Activated CD8-positive, alpha-beta T cell treated with anti-CD3 and anti-CD28 coated beads, Interleukin-2, amount 10 ng/mL, durations not matched to agents 7 days and 5 days (primary cell): ENCODE measurements at regions of chr6 and their contacts with region 1.

Region 1: DNA sequence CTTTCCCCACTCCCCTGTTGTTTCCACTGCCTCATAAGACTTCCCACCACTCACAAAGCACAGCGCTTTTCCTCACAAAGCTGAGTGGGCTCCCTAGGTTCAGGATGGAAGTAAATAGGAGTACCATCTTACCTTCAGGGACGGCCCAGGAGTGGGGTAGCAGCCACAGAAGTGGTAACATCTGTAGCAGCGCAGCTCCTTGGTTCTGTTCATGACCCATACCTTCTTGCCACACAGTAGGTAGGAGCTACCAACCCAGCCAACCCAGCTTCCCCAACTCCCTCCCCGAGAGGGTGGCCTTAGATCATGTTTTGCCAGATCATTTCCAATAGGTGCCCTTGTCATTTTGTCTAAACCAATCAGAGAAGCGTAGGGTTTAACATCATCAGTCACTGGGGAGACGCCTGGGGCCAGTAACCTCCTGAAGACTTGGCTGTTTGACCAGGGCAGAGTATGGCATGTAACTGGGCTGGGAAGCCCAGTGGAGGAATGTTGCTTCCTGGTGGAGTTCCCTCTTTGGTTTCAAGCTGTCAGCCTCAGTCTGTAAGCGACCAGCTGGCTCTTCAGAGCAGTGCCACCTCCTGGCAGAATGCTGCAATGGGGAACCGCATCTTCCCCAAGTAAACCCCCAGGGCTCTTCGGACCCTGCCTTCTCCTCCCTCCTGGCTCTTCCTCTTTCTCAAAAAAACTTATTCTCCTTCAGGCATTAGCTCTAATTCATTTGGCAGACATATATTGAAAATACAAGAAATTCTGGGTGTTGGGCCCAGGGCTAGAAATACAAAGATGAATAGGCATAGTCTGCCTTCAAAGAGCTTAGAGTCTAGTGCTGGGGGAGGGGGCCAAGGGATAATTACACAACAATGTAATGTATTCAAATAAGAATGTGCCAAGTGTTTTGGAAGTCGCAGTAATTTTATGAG is at the start of gene HLA-DMA:
- DNase-seq: peak; percentile 85
- ATAC-seq: peak; percentile 98
- H3K4me3 Mint-ChIP-seq: peak within 1 kb of the TSS; percentile 77
- H3K27ac Mint-ChIP-seq: peak within 1 kb of the TSS; percentile 83
- H3K4me1 Mint-ChIP-seq: peaks cover 62% of the 10 kb centered on the region
- H3K27me3 Mint-ChIP-seq: no peaks in the 10 kb centered on the region
- total RNA-seq, gene HLA-DMA: 28.6 to 30.5 TPM

Region 2: GRCh38 chr6:32853541-32854375 is 99.3 kb before region 1 on chr6 and contains the starts of genes PSMB9 and TAP1:
- CTCF ChIA-PET with region 1: interaction called, 23 read pairs
- POLR2A ChIA-PET with region 1: interaction called, 4 read pairs
- DNase-seq: peak; percentile 97
- ATAC-seq: peak; percentile 85
- H3K4me3 Mint-ChIP-seq: peak within 1 kb of the TSS; percentile 97
- H3K27ac Mint-ChIP-seq: peak within 1 kb of the TSS; percentile 100
- H3K4me1 Mint-ChIP-seq: peaks cover 58% of the 10 kb centered on the region
- H3K27me3 Mint-ChIP-seq: no peaks in the 10 kb centered on the region
- total RNA-seq, gene PSMB9: 319 to 325 TPM
- total RNA-seq, gene TAP1: 319 to 328 TPM

Region 3: DNA sequence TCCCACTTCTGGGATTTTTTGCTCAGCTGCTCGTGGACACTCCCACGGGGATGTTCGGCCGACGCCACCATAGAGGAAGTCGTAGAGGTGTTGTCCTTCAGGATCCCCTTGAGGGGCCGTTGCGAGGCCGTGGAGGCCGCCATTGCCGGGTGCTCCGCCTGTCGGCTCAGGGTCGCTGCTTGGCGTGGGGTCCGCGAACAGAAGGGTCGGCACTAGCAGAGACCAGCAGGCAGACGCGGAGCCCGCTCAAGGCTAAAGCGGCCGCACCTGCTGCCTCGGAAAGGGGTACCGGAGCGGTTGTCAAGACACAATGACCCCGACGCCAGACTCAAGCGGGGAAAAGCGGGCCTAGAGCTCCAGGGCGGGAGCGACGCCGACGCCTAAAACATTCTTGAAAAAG is 73.4 kb before region 1 on chr6:
- CTCF ChIA-PET with region 1: interaction called, 57 read pairs
- POLR2A ChIA-PET with region 1: no interaction called
- DNase-seq: no peak
- ATAC-seq: no peak
- H3K4me3 Mint-ChIP-seq: no peak overlapping the region
- H3K27ac Mint-ChIP-seq: no peak overlapping the region
- H3K4me1 Mint-ChIP-seq: no peaks in the 10 kb centered on the region
- H3K27me3 Mint-ChIP-seq: no peaks in the 10 kb centered on the region

Region 4: GRCh38 chr6:32885698-32886286 is 67.3 kb before region 1 on chr6:
- CTCF ChIA-PET with region 1: interaction called, 57 read pairs
- POLR2A ChIA-PET with region 1: no interaction called
- DNase-seq: no peak
- ATAC-seq: peak; percentile 61
- H3K4me3 Mint-ChIP-seq: no peak overlapping the region
- H3K27ac Mint-ChIP-seq: no peak overlapping the region
- H3K4me1 Mint-ChIP-seq: peaks cover 2% of the 10 kb centered on the region
- H3K27me3 Mint-ChIP-seq: peaks cover 16% of the 10 kb centered on the region

Region 5: DNA sequence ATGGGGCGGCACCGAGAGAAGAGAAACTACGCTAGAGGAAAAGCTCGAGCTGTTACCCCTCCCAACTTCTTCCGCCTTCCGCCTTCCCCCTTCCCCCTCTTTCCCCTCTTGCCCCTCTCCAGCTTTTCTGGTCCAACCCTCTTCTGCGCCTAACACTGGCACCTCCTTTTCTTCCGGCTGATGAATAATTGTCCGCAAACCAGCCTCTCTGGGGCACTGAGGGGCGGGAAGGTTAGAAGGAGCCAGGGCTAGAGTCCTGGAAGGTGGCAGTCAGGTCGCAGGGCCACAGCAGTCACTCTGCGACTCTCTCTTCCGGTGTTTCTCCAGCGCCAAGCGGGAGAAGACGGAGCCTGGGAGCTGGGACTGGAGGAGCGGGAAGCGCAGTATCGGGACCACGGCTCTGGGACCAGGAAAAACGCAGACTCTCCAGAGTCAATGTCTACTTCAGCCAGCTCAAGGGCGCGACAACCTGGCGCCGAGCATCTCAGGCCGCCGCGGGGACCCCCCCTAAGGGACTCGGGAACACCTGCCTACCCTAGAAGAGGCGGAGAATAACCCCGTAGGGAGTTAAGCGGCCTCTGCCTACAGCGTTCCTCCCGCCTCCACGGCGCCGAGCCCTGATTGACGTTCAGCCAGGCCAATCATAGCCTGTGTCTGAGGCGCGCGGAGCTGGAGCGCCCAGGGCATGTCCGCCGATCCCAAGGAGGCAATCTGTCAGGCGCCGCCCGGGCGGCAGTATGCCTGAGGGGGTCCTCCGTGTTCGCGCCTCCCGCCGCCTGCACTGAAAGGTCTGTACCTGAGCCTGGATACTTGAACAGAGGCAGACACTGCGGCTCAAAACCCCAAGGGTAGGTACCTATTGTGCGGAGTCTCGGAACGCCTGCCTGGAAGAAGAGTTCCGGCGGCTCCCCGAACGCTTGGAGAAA is 58.7 kb before region 1 on chr6:
- CTCF ChIA-PET with region 1: interaction called, 43 read pairs
- POLR2A ChIA-PET with region 1: interaction called, 9 read pairs
- DNase-seq: peak; percentile 94
- ATAC-seq: peak; percentile 99
- H3K4me3 Mint-ChIP-seq: peak overlapping the region; percentile 98
- H3K27ac Mint-ChIP-seq: peak overlapping the region; percentile 94
- H3K4me1 Mint-ChIP-seq: peaks cover 37% of the 10 kb centered on the region
- H3K27me3 Mint-ChIP-seq: peaks cover 10% of the 10 kb centered on the region

Region 6: DNA sequence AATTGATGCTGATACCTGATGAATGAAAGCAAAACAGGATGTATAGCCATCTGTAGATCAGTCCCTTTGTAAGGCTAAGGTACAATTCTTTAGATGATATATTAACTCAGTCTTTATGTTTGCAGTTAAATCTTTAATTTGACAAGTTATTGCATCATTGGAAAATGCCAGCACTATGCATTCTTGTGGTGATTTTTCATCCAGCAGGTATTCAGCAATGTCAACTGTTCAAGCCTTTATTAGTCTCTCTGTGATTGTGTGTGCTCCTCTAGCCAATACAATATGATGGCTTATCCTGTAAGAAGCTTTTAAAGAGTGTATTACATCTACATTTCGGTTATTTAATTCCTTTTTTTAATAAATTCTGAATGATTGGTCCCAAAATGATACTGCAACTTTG is 46.5 kb before region 1 on chr6:
- CTCF ChIA-PET with region 1: interaction called, 22 read pairs
- POLR2A ChIA-PET with region 1: no interaction called
- DNase-seq: no peak
- ATAC-seq: no peak
- H3K4me3 Mint-ChIP-seq: no peak overlapping the region
- H3K27ac Mint-ChIP-seq: no peak overlapping the region
- H3K4me1 Mint-ChIP-seq: no peaks in the 10 kb centered on the region
- H3K27me3 Mint-ChIP-seq: peaks cover 8% of the 10 kb centered on the region

Region 7: DNA sequence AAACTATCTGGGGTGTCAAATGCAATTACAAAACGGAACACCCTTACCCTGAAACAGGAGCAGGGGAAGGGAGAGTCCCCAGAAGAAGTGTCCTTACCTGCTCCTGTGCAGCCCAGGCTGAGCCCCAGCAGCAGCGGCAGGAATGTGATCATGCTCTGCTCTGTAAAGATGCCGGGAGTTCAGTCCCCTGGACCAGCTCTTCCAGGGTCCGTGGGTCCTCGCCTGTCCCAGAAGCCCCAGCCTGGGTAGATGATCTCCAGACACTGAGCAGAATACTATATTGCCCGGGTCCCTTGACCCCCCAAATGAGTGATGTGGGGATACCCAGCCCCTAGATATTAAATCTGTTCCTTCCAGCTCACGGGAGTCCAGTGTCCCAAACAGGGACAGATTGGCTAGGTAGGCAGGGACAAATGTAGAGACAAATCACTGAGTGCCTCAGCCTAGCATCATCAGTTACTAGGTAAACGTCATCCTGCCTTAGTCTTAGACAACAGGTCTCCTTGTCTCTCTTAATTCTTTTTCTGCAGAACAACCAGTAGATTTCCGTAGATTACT is 12.3 kb before region 1 on chr6 and contains the start of gene HLA-DMB:
- CTCF ChIA-PET with region 1: interaction called, 519 read pairs
- POLR2A ChIA-PET with region 1: interaction called, 12 read pairs
- DNase-seq: peak; percentile 73
- ATAC-seq: peak; percentile 90
- H3K4me3 Mint-ChIP-seq: peak within 1 kb of the TSS; percentile 86
- H3K27ac Mint-ChIP-seq: peak within 1 kb of the TSS; percentile 97
- H3K4me1 Mint-ChIP-seq: peaks cover 69% of the 10 kb centered on the region
- H3K27me3 Mint-ChIP-seq: no peaks in the 10 kb centered on the region
- total RNA-seq, gene HLA-DMB: 14.4 to 14.7 TPM

Region 8: GRCh38 chr6:33235221-33235634 is 282.1 kb after region 1 on chr6:
- CTCF ChIA-PET with region 1: no interaction called
- POLR2A ChIA-PET with region 1: no interaction called
- DNase-seq: no peak
- ATAC-seq: no peak
- H3K4me3 Mint-ChIP-seq: no peak overlapping the region
- H3K27ac Mint-ChIP-seq: no peak overlapping the region
- H3K4me1 Mint-ChIP-seq: peaks cover under 1% of the 10 kb centered on the region
- H3K27me3 Mint-ChIP-seq: peaks cover 25% of the 10 kb centered on the region